Activated naive CD8-positive, alpha-beta T cell treated with anti-CD3 and anti-CD28 coated beads, Interleukin-2, amount 10 ng/mL, durations not matched to agents 7 days and 5 days (primary cell): ENCODE measurements at regions of chr7 and their contacts with region 1.

Region 1: GRCh38 chr7:144835652-144836544 is at the start of gene TPK1:
- DNase-seq: peak; percentile 93
- ATAC-seq: peak; percentile 91
- H3K4me3 Mint-ChIP-seq: peak within 1 kb of the TSS; percentile 98
- H3K27ac Mint-ChIP-seq: peak within 1 kb of the TSS; percentile 99
- H3K4me1 Mint-ChIP-seq: peaks cover 20% of the 10 kb centered on the region
- H3K27me3 Mint-ChIP-seq: no peaks in the 10 kb centered on the region
- total RNA-seq, gene TPK1: 17.7 to 21.0 TPM

Region 2: GRCh38 chr7:144812379-144813283 is 23.3 kb before region 1 on chr7:
- POLR2A ChIA-PET with region 1: interaction called, 96 read pairs
- DNase-seq: no peak
- ATAC-seq: peak; percentile 96
- H3K4me3 Mint-ChIP-seq: peak overlapping the region; percentile 71
- H3K27ac Mint-ChIP-seq: peak overlapping the region; percentile 75
- H3K4me1 Mint-ChIP-seq: peaks cover 38% of the 10 kb centered on the region
- H3K27me3 Mint-ChIP-seq: no peaks in the 10 kb centered on the region

Region 3: GRCh38 chr7:144818511-144818910 is 17.4 kb before region 1 on chr7:
- POLR2A ChIA-PET with region 1: interaction called, 96 read pairs
- DNase-seq: no peak
- ATAC-seq: peak; percentile 89
- H3K4me3 Mint-ChIP-seq: peak overlapping the region; percentile 65
- H3K27ac Mint-ChIP-seq: peak overlapping the region; percentile 88
- H3K4me1 Mint-ChIP-seq: peaks cover 57% of the 10 kb centered on the region
- H3K27me3 Mint-ChIP-seq: no peaks in the 10 kb centered on the region